ENCODE measurements at regions of chr19 and their contacts with region 1.

Region 1: DNA sequence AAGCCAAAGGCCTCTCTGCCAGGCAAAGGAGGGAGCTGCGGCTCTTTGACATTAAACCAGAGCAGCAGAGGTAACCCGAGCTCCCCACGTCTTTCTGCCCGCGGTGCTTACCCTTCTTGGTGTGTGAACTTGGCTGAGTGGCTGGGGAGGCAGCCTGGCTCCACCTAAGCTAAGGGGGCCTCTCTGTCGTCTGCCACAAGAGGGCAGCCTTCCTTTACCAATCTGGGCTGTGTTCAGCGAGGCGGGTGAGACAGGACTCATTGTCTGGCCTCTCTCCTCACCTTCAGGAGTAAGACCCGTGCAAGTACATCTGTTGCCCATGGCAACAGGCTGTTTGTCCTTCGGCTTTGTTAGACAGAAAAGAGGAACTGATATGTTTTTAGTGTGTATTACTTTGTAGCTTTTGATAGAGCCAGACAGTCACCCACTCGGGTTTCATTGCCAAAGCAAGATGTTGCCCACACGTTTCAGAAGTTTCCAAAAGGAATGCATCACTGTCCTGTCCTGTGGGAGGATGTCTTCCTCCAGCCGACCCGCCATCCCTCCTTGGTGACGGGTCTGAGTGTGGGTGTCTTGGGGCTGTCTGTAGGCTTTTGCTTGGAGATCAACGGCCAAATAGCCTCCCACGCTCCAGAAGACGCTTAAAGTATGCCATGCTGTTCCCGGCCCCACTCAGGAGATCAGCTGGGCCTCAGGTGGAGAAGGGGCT is 4.6 kb downstream of the POP4 start:
- DNase-seq: peak; percentile 79

Region 2: GRCh38 chr19:29528350-29528945 is 82.3 kb before region 1 on chr19:
- in situ Hi-C with region 1: no loop called
- DNase-seq: no peak

Region 3: GRCh38 chr19:29576046-29576606 is 34.6 kb before region 1 on chr19:
- in situ Hi-C with region 1: no loop called
- DNase-seq: no peak

Region 4: GRCh38 chr19:29714953-29715700 is 104.4 kb after region 1 on chr19 and contains the start of gene C19orf12:
- in situ Hi-C with region 1: loop called (anchors 10 kb)
- DNase-seq: peak; percentile 64
- total RNA-seq, gene C19orf12: 20.9 and 49.2 TPM in 2 replicates

Region 5: GRCh38 chr19:29941828-29942403 is 331.2 kb after region 1 on chr19 and contains the start of gene URI1:
- in situ Hi-C with region 1: loop called (anchors 25 kb)
- DNase-seq: peak; percentile 81
- total RNA-seq, gene URI1: 47.4 and 68.7 TPM in 2 replicates

Measured in Caki2 (cell line).